GM18951 (cell line): ENCODE measurements at regions of chr4 and their contacts with region 1.

Region 1: DNA sequence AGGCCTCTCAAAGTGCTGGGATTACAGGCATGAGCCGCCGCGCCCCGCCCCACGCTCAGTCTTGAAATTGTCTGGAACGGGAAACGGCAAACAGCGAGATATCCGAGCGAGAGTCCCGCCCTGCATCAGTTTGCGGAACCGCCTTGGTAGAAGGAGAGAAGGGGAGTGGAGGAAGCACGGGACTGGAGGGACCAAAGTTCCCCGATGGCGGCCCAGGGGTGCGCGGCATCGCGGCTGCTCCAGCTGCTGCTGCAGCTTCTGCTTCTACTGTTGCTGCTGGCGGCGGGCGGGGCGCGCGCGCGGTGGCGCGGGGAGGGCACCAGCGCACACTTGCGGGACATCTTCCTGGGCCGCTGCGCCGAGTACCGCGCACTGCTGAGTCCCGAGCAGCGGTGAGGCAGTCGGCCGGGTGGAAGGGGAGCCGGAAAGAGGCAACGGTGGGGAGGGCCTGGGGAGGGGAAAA is at the start of gene BST1:
- POLR2A ChIP-seq: no peak

Region 2: DNA sequence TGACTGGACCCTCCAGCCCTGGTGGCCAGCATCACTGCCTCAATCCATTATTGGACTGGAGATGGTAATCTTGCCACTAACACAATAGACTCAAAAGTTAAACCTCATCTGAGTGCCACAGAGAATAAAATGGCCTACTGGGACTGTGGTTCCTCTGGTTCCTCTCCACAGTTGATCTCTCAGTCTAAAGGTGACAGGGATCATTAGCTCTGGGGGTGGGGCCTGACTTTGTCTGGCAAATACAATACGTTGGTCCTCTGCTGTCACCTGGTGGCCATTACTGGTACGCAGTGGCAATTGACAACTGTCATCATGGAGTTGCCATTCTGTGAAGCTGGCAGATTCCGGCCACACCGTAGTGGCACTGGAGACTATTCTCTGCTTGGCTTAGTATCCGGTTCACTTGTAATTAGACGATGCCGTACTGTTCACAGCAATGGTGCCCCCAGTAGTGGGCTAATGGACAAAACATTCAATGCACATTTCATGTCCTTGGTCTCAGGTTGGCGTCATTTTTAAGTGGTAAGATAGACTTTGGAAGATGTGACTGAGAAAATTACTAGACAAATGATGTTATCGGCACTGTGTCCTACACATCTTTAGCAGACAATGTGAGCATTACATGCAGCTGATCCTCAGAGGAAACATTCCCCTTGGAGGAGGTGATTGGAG is 253.3 kb after region 1 on chr4:
- in situ Hi-C with region 1: loop called (anchors 25 kb)
- POLR2A ChIP-seq: no peak